ENCODE measurements at regions of chr18 and their contacts with region 1.

Region 1: DNA sequence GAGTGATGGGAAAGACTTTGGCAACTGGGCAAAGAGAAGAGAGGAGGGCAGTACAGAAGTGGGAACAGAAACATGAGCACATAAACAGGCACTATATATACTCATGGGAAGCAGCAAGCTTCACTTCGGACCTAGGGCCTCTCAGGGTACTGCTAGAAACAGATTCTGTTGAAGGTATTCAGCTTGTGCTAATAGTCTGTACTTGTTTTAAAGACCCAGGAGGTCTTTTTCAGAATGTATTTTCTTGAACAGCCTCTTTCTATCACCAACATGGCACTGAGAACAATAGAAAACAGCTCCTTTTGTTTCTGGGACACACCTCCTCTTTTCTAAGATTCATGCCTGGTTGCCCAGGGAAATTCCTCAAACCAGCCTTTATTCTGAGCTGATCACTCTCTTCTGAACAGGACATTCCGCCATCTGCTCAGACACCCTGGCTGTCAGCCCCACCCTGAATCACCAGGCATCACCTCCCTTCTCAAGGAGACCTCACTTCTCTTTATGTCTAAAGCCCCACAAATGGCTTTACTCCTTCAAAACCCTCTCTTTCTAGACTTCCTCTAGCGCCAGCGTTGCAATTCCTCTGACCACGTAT is 389.6 kb downstream of the TGIF1 start:
- DNase-seq: peak; percentile 64
- H3K4me3 ChIP-seq: peak overlapping the region; percentile 54
- H3K27ac ChIP-seq: peak overlapping the region; percentile 98
- H3K4me1 ChIP-seq: peaks cover 84% of the 10 kb centered on the region
- H3K27me3 ChIP-seq: no peaks in the 10 kb centered on the region
- CTCF ChIP-seq: no peak

Region 2: GRCh38 chr18:3892152-3892551 is 52.6 kb after region 1 on chr18:
- CTCF ChIA-PET with region 1: no interaction called
- POLR2A ChIA-PET with region 1: no interaction called
- intact Hi-C with region 1: no loop called
- DNase-seq: no peak
- H3K4me3 ChIP-seq: no peak overlapping the region
- H3K27ac ChIP-seq: no peak overlapping the region
- H3K4me1 ChIP-seq: no peaks in the 10 kb centered on the region
- H3K27me3 ChIP-seq: no peaks in the 10 kb centered on the region
- CTCF ChIP-seq: no peak

Region 3: DNA sequence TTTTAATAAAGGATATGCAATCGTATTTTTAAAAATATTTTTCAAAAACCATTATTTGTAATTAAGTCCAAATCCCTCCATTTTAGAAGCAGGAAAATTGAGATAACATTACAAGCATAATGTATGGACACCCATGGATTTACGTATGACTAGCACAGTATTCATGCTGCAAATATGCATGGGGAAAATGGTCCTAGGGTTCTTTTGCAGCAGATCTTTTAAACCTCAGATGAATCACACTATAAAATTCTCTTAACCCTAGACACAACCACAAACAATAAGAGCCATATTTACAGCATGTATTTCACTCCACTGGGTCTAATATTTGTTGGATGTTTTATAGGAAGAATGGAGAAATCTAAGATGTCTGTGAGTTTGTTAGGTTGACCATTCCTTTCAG is 63.8 kb after region 1 on chr18:
- CTCF ChIA-PET with region 1: no interaction called
- POLR2A ChIA-PET with region 1: no interaction called
- intact Hi-C with region 1: loop called (anchors 10 kb)
- DNase-seq: peak; percentile 27
- H3K4me3 ChIP-seq: no peak overlapping the region
- H3K27ac ChIP-seq: no peak overlapping the region
- H3K4me1 ChIP-seq: peaks cover 18% of the 10 kb centered on the region
- H3K27me3 ChIP-seq: no peaks in the 10 kb centered on the region
- CTCF ChIP-seq: no peak

Region 4: GRCh38 chr18:3995476-3996102 is 156.0 kb after region 1 on chr18:
- CTCF ChIA-PET with region 1: interaction called, 3 read pairs
- POLR2A ChIA-PET with region 1: no interaction called
- intact Hi-C with region 1: loop called (anchors 2 kb)
- DNase-seq: peak; percentile 93
- H3K4me3 ChIP-seq: peak overlapping the region; percentile 13
- H3K27ac ChIP-seq: peak overlapping the region; percentile 83
- H3K4me1 ChIP-seq: peaks cover 48% of the 10 kb centered on the region
- H3K27me3 ChIP-seq: no peaks in the 10 kb centered on the region
- CTCF ChIP-seq: peak; percentile 92

Region 5: GRCh38 chr18:4264347-4264791 is 424.8 kb after region 1 on chr18:
- CTCF ChIA-PET with region 1: no interaction called
- POLR2A ChIA-PET with region 1: no interaction called
- intact Hi-C with region 1: loop called (anchors 5 kb)
- DNase-seq: peak; percentile 83
- H3K4me3 ChIP-seq: peak overlapping the region; percentile 27
- H3K27ac ChIP-seq: peak overlapping the region; percentile 79
- H3K4me1 ChIP-seq: peaks cover 62% of the 10 kb centered on the region
- H3K27me3 ChIP-seq: no peaks in the 10 kb centered on the region
- CTCF ChIP-seq: no peak

Region 6: DNA sequence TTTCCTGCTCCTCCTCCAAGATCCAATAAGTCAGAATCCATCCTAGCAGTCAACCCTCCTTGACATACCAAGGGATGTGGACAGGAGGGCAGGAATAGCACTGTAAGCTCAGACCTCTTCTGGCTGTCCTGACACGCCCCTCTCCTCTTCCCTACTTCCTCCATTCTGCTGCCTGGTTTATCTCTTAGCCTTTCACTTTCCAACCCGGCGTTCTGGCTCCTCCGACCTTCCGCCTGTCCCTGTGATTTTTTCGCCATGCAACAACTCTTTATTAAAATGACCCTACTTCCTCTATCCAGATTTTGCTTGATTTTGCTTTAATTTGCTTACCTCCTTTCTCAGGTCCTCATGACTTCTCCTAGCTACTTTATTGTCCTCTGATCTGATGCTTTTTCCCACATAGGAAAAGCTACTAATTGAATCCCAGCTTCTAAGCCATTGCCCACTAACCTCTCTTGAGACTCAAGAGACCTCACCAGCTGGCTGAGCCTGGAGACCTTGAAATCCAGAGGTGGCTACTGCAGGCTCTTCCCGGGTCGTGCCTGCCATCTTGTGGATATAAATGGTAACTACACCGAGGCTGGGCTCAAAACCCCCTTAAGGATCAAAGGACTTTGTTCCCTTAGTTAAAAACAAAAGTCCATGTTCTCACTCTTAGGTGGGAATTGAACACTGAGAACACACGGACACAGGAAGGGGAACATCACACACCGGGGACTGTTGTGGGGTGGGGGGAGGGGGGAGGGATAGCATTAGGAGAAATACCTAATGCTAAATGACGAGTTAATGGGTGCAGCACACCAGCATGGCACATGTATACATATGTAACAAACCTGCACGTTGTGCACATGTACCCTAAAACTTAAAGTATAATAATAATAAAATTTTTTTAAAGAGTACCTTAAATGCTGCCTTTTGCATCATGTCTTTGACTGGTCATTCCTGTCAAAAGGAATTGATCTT is 1218.1 kb after region 1 on chr18:
- CTCF ChIA-PET with region 1: no interaction called
- POLR2A ChIA-PET with region 1: no interaction called
- intact Hi-C with region 1: loop called (anchors 5 kb)
- DNase-seq: peak; percentile 85
- H3K4me3 ChIP-seq: no peak overlapping the region
- H3K27ac ChIP-seq: no peak overlapping the region
- H3K4me1 ChIP-seq: peaks cover 20% of the 10 kb centered on the region
- H3K27me3 ChIP-seq: no peaks in the 10 kb centered on the region
- CTCF ChIP-seq: peak; percentile 83

Measured in A673 (cell line).